AG04449 (cell line): ENCODE measurements at regions of chr9 and their contacts with region 1.

Region 1: DNA sequence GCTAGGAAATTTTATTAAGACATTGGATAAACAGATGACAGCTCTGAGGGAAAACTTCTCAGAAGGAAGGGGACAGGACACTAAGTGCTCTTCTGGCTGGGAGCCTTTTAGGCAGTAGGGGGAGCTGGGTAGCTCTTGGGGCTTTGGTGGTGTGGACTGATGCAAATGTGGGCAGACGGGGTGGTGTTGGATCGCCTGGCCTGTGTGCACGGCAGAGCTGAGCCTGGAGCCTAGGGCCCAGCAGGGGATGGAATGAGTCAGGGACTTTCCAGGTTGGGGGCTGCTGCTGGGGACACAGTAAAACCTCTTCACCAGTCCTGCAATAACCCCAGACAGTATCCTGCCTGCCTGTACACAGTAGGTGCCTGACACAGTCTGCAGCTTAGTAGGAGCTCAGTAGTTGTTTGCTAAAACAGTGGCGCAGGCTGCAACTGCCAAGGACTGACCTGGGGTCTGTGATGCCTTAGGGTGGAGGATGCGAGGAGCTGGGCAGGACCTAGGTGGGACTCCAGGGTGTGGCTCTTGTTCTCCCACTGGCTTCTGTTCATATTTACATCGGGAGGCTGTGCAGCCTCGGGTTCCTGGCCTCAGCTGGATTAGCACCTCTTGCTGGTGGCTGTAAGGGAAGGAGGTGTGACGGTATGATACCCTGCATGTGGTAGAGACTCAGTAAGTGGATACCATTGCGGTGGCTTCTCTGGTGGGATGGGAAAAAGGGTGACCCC is 83.8 kb downstream of the DAB2IP start:
- DNase-seq: peak; percentile 42
- H3K4me3 ChIP-seq: no peak overlapping the region
- CTCF ChIP-seq: peak; percentile 77

Region 2: DNA sequence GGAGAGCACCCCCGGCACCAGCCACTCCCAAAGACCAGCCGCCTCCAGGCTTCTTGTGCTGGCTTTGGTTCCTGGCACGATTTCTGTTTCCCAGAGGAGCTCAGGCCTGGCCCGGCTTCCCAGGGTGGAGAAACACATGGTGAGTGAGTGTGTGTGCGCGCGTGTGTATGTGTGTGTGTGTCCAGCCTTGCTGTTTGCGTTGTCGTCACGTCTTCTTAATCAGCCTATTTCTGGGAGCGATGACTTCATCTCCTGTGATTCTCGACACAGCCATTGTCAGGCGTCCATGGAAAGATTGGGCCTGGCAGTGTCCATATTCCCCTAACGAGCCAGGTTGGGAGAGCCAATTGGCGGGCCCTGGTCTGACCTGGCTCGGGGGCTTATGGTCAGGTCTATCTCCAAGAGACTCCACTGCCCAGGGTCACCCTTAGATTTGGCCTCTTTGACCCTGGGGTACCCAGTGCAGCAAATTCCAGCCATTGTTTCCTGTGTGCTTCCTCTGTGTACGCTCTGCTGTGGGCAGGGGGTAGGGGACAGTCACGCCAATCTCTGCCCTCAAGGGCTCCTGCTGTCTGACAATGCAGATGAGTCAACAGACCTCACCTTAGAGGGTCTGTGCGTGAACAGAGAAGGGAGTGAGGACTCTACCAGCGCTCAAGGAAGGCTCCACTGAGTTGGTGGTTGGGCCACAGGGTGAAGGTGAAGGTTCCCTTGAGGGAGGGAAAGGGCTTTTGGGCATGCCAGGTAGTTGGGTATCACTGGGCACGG is 10.0 kb before region 1 on chr9:
- CTCF ChIA-PET with region 1: interaction called, 15 read pairs
- POLR2A ChIA-PET with region 1: no interaction called
- DNase-seq: peak; percentile 98
- H3K4me3 ChIP-seq: no peak overlapping the region
- CTCF ChIP-seq: no peak

Region 3: GRCh38 chr9:121992571-121993212 is 257.5 kb after region 1 on chr9:
- CTCF ChIA-PET with region 1: interaction called, 24 read pairs
- POLR2A ChIA-PET with region 1: no interaction called
- DNase-seq: peak; percentile 21
- H3K4me3 ChIP-seq: no peak overlapping the region
- CTCF ChIP-seq: peak; percentile 55

Region 4: GRCh38 chr9:121997791-121998190 is 262.6 kb after region 1 on chr9:
- CTCF ChIA-PET with region 1: interaction called, 17 read pairs
- POLR2A ChIA-PET with region 1: no interaction called
- DNase-seq: no peak
- H3K4me3 ChIP-seq: no peak overlapping the region
- CTCF ChIP-seq: no peak